Transverse colon (tissue), 4 donors: ENCODE measurements at regions of chr1 and their contacts with region 1.

Region 1: DNA sequence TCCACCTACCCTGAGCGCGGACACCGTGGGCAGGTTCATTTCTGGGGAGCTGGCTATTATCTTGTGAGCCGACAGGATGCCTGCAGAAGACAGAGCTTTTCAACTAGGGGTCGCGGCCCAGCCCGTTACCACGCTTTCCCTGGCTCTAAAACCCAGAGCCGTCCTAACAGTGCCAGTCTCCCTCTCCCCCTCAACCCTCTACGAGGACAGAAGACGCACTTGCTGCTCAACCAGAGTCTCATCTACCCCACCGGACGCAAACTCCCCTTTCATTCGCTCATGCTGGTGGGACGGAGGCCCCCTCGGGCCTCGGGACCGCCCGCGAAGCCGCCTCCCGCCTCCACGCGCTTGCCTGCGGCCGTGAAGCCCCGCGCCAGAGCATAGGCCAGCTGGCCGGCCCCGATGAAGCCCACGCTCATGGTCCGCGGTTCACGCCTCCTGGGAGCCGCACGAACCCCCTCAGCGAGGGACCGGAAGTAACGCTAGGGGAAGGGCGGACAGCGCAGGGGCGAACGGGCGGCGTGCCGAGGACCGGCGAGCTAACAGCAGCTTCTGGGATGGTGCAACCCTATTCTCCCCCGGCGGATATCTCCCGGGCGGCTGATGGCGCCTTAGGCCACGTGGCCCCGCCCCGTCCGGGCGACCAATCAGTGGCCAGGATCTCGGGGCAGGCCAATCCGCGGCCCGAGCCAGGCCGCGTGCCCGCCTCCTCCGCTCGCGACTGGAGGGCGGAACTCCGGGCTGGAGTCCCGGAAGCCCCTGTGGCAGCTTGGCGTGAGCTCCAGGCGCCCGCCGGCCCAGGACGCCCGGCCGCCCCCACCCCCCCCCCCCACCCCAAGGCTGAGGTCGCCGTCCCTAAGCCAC is at the start of gene PYCR2:
- DNase-seq: peak; percentile 96
- H3K4me3 ChIP-seq: peak within 1 kb of the TSS; percentile 63 to 91 (median 86)
- H3K27ac ChIP-seq: peak within 1 kb of the TSS; percentile 91 to 98 (median 94)
- H3K4me1 ChIP-seq: peaks cover 9 to 32% (median 26%) of the 10 kb centered on the region in 4 donors
- H3K27me3 ChIP-seq: no peaks in the 10 kb centered on the region
- CTCF ChIP-seq: no peak
- EP300 ChIP-seq: no peak
- POLR2A ChIP-seq: peak; percentile 89
- total RNA-seq, gene PYCR2: 26.5 to 40.6 (median 32.2) TPM

Region 2: GRCh38 chr1:225834417-225835329 is 89.3 kb before region 1 on chr1:
- in situ Hi-C with region 1: no loop called
- intact Hi-C with region 1: no loop called
- DNase-seq: no peak
- H3K4me3 ChIP-seq: no peak overlapping the region
- H3K27ac ChIP-seq: peak overlapping the region; percentile 34 to 68 (median 36)
- H3K4me1 ChIP-seq: peaks cover 0 to 10% (median 0%) of the 10 kb centered on the region in 4 donors
- H3K27me3 ChIP-seq: no peaks in the 10 kb centered on the region
- CTCF ChIP-seq: no peak
- EP300 ChIP-seq: no peak
- POLR2A ChIP-seq: no peak

Region 3: DNA sequence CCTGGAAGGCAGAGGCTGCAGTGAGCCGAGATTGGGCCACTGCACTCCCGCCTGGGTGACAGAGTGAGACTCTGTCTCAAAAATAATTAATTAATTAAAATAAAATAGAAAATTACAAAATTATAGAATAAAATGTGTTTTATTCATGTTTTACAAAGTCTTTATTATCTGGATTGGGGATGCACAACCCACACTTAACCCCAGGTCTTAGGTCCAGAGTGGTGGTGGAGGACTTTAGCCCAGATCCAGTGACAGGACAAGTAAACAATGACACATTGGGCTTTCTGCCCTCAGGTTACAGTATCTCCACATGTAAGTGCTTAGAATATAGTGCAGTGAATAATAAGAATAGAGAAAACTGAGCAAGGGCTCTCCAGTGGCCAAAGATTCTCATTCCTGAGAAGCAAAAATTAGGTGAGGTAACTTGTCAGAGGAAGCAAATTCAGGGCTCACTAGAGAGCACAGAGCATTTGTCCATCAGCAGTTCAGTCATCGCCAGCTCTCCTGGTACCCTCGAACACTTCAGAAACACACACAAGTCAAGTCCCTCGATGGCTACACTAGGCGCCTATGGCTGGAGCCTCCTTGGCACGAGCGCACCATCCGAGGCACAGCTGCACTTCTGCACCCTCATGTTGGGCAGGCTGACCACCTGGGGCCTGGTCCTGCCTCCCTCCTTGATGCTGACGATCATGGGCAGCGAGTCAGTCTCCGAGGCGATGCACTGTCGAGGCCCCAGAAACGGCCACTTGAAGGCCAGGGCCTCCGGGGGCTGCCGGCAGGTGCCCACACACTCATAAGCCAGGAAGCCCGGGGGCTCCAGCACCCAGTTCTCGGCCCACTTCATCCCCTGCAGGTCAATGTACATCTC is 37.5 kb before region 1 on chr1:
- in situ Hi-C with region 1: no loop called
- intact Hi-C with region 1: loop called (anchors 1 kb)
- DNase-seq: no peak
- H3K4me3 ChIP-seq: peak overlapping the region in 2 of 4 donors; percentile 48 to 51
- H3K27ac ChIP-seq: peak overlapping the region in 3 of 4 donors; percentile 82 to 98 (median 98)
- H3K4me1 ChIP-seq: peaks cover 7 to 41% (median 17%) of the 10 kb centered on the region in 4 donors
- H3K27me3 ChIP-seq: no peaks in the 10 kb centered on the region
- CTCF ChIP-seq: no peak
- EP300 ChIP-seq: no peak
- POLR2A ChIP-seq: no peak

Region 4: GRCh38 chr1:226066415-226067078 is 142.6 kb after region 1 on chr1:
- in situ Hi-C with region 1: no loop called
- intact Hi-C with region 1: no loop called
- DNase-seq: no peak
- H3K4me3 ChIP-seq: peak overlapping the region in 1 of 4 donors; percentile 1
- H3K27ac ChIP-seq: peak overlapping the region in 1 of 4 donors; percentile 0
- H3K4me1 ChIP-seq: peaks cover 35 to 62% (median 46%) of the 10 kb centered on the region in 4 donors
- H3K27me3 ChIP-seq: no peaks in the 10 kb centered on the region
- CTCF ChIP-seq: no peak
- EP300 ChIP-seq: no peak
- POLR2A ChIP-seq: no peak

Region 5: GRCh38 chr1:226083302-226084101 is 159.6 kb after region 1 on chr1:
- in situ Hi-C with region 1: no loop called
- intact Hi-C with region 1: no loop called
- DNase-seq: peak; percentile 95
- H3K4me3 ChIP-seq: peak overlapping the region; percentile 44 to 79 (median 68)
- H3K27ac ChIP-seq: peak overlapping the region; percentile 70 to 82 (median 79)
- H3K4me1 ChIP-seq: peaks cover 5 to 11% (median 8%) of the 10 kb centered on the region in 4 donors
- H3K27me3 ChIP-seq: no peaks in the 10 kb centered on the region
- CTCF ChIP-seq: peak in 2 of 5 experiments; percentile 9 to 13
- EP300 ChIP-seq: no peak
- POLR2A ChIP-seq: no peak